ENCODE measurements at regions of chr10 and their contacts with region 1.

Region 1: GRCh38 chr10:59625721-59626522 is 83.7 kb downstream of the SLC16A9 start:
- DNase-seq: peak; percentile 51
- ATAC-seq: peak; percentile 83
- H3K4me3 ChIP-seq: no peak overlapping the region
- H3K27ac ChIP-seq: no peak overlapping the region
- H3K4me1 ChIP-seq: no peaks in the 10 kb centered on the region
- H3K27me3 ChIP-seq: no peaks in the 10 kb centered on the region; a peak in 1 of 5 replicates
- CTCF ChIP-seq: peak; percentile 92
- EP300 ChIP-seq: no peak
- POLR2A ChIP-seq: no peak
- RAD21 ChIP-seq: peak; percentile 85

Region 2: GRCh38 chr10:58781873-58782488 is 843.9 kb before region 1 on chr10:
- CTCF ChIA-PET with region 1: interaction called, 12 read pairs
- POLR2A ChIA-PET with region 1: no interaction called
- in situ Hi-C with region 1: loop called (anchors 5 kb)
- intact Hi-C with region 1: loop called (anchors 1 kb)
- DNase-seq: peak; percentile 42
- ATAC-seq: peak; percentile 72
- H3K4me3 ChIP-seq: no peak overlapping the region
- H3K27ac ChIP-seq: no peak overlapping the region
- H3K4me1 ChIP-seq: peaks cover 8% of the 10 kb centered on the region; the same call in 1 of the 2 replicates
- H3K27me3 ChIP-seq: no peaks in the 10 kb centered on the region
- CTCF ChIP-seq: peak; percentile 75
- EP300 ChIP-seq: no peak
- POLR2A ChIP-seq: no peak
- RAD21 ChIP-seq: peak; percentile 39; the same call in 1 of the 2 replicates

Region 3: GRCh38 chr10:58952747-58953466 is 673.0 kb before region 1 on chr10:
- CTCF ChIA-PET with region 1: no interaction called
- POLR2A ChIA-PET with region 1: no interaction called
- in situ Hi-C with region 1: loop called (anchors 10 kb)
- intact Hi-C with region 1: loop called (anchors 10 kb)
- DNase-seq: peak; percentile 53
- ATAC-seq: peak; percentile 86
- H3K4me3 ChIP-seq: no peak overlapping the region
- H3K27ac ChIP-seq: no peak overlapping the region
- H3K4me1 ChIP-seq: peaks cover 58% of the 10 kb centered on the region
- H3K27me3 ChIP-seq: no peaks in the 10 kb centered on the region
- CTCF ChIP-seq: peak; percentile 82
- EP300 ChIP-seq: no peak
- POLR2A ChIP-seq: no peak
- RAD21 ChIP-seq: peak; percentile 87

Region 4: DNA sequence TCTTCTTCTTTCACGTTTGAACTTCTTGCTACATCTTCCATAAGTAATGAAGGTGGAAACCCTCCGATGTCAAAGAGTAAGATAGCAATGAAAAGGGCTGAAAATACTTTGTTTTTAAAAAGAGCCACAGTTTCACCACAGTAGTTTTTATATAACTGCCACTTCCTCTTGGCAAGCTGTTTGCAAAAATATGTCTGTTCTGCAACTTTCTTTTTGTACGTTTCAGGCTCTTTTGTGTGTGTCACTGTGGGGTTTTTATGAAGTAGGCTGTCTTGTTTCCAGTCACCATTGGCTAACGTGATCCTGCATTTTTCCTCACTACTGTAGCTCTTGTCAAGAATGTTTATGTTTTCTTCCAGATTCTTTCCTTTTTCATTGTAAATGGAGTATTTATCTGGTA is 28.1 kb after region 1 on chr10:
- CTCF ChIA-PET with region 1: no interaction called
- POLR2A ChIA-PET with region 1: no interaction called
- in situ Hi-C with region 1: no loop called
- intact Hi-C with region 1: no loop called
- DNase-seq: no peak
- ATAC-seq: no peak
- H3K4me3 ChIP-seq: no peak overlapping the region
- H3K27ac ChIP-seq: no peak overlapping the region
- H3K4me1 ChIP-seq: no peaks in the 10 kb centered on the region
- H3K27me3 ChIP-seq: no peaks in the 10 kb centered on the region
- CTCF ChIP-seq: no peak
- EP300 ChIP-seq: no peak
- POLR2A ChIP-seq: no peak
- RAD21 ChIP-seq: no peak

Region 5: GRCh38 chr10:59830601-59831259 is 204.8 kb after region 1 on chr10:
- CTCF ChIA-PET with region 1: interaction called, 14 read pairs
- POLR2A ChIA-PET with region 1: no interaction called
- in situ Hi-C with region 1: no loop called
- intact Hi-C with region 1: loop called (anchors 1 kb)
- DNase-seq: peak; percentile 38
- ATAC-seq: peak; percentile 90
- H3K4me3 ChIP-seq: no peak overlapping the region
- H3K27ac ChIP-seq: no peak overlapping the region
- H3K4me1 ChIP-seq: no peaks in the 10 kb centered on the region
- H3K27me3 ChIP-seq: no peaks in the 10 kb centered on the region
- CTCF ChIP-seq: peak; percentile 73
- EP300 ChIP-seq: no peak
- POLR2A ChIP-seq: no peak
- RAD21 ChIP-seq: no peak

Region 6: DNA sequence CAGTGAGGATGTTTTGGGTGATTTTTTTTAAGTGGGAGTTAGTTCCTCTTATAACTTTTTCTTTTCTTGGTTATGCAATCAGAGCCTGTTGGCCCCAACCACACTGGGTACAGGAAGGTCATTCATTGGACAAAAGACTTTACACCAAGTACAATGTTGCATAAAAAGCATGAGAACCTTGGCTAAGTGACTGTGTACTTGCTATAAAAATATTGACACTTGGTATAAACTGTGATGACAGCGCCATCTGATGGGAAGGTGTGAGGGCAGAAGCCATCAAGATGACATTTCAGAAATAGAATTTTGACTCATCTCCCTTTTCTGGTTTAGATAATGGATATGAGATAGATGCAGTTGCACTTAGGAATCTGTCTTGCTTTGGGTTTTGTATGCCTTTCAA is 406.8 kb after region 1 on chr10:
- CTCF ChIA-PET with region 1: interaction called, 11 read pairs
- POLR2A ChIA-PET with region 1: no interaction called
- in situ Hi-C with region 1: loop called (anchors 5 kb)
- intact Hi-C with region 1: no loop called
- DNase-seq: peak; percentile 62
- ATAC-seq: peak; percentile 77
- H3K4me3 ChIP-seq: no peak overlapping the region
- H3K27ac ChIP-seq: no peak overlapping the region
- H3K4me1 ChIP-seq: no peaks in the 10 kb centered on the region
- H3K27me3 ChIP-seq: no peaks in the 10 kb centered on the region
- CTCF ChIP-seq: peak; percentile 71
- EP300 ChIP-seq: no peak
- POLR2A ChIP-seq: no peak
- RAD21 ChIP-seq: peak; percentile 36; the same call in 1 of the 2 replicates

Region 7: GRCh38 chr10:60208676-60209269 is 582.9 kb after region 1 on chr10:
- CTCF ChIA-PET with region 1: no interaction called
- POLR2A ChIA-PET with region 1: no interaction called
- in situ Hi-C with region 1: no loop called
- intact Hi-C with region 1: loop called (anchors 2 kb)
- DNase-seq: peak; percentile 18
- ATAC-seq: 0 out of 3 replicates have a peak, but pooled peaks have one; percentile 41
- H3K4me3 ChIP-seq: no peak overlapping the region
- H3K27ac ChIP-seq: no peak overlapping the region
- H3K4me1 ChIP-seq: no peaks in the 10 kb centered on the region
- H3K27me3 ChIP-seq: no peaks in the 10 kb centered on the region
- CTCF ChIP-seq: peak; percentile 64
- EP300 ChIP-seq: no peak
- POLR2A ChIP-seq: no peak
- RAD21 ChIP-seq: peak; percentile 32; the same call in 1 of the 2 replicates

Measured in HepG2 (cell line).